ENCODE measurements at regions of chr15 and their contacts with region 1.

Region 1: GRCh38 chr15:52261498-52262242 is 33.9 kb downstream of the MYO5C start:
- DNase-seq: peak; percentile 87
- H3K4me3 Mint-ChIP-seq: peak overlapping the region; percentile 32
- H3K27ac Mint-ChIP-seq: peak overlapping the region; percentile 80
- H3K4me1 Mint-ChIP-seq: peaks cover 36% of the 10 kb centered on the region
- H3K27me3 Mint-ChIP-seq: no peaks in the 10 kb centered on the region

Region 2: GRCh38 chr15:52171386-52171785 is 90.3 kb before region 1 on chr15:
- CTCF ChIA-PET with region 1: no interaction called
- POLR2A ChIA-PET with region 1: no interaction called
- intact Hi-C with region 1: no loop called
- DNase-seq: no peak
- H3K4me3 Mint-ChIP-seq: no peak overlapping the region
- H3K27ac Mint-ChIP-seq: no peak overlapping the region
- H3K4me1 Mint-ChIP-seq: peaks cover 34% of the 10 kb centered on the region
- H3K27me3 Mint-ChIP-seq: no peaks in the 10 kb centered on the region

Region 3: DNA sequence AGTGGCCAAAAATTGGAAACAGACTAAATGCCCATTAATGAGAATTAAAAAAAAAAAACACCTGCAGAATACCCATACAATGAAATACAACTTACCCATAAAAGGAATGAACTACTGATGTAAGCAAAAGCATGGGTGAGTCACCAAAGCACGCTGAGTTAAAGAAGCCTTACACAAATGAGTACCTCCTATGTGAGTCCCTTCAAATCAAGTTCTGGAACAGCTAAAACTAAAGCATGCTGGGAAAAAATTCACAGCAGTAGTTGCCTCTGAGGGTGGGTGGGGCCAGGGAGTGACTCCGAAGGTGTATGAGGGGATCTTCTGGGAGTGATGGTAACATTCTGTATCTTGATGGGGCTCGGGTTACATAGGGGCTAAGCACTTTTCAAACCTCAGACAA is 22.5 kb after region 1 on chr15:
- CTCF ChIA-PET with region 1: interaction called, 4 read pairs
- POLR2A ChIA-PET with region 1: no interaction called
- intact Hi-C with region 1: loop called (anchors 1 kb)
- DNase-seq: peak; percentile 45
- H3K4me3 Mint-ChIP-seq: no peak overlapping the region
- H3K27ac Mint-ChIP-seq: no peak overlapping the region
- H3K4me1 Mint-ChIP-seq: peaks cover 1% of the 10 kb centered on the region
- H3K27me3 Mint-ChIP-seq: peaks cover 3% of the 10 kb centered on the region

Region 4: GRCh38 chr15:52289629-52290081 is 28.0 kb after region 1 on chr15:
- CTCF ChIA-PET with region 1: interaction called, 9 read pairs
- POLR2A ChIA-PET with region 1: no interaction called
- intact Hi-C with region 1: loop called (anchors 1 kb)
- DNase-seq: no peak
- H3K4me3 Mint-ChIP-seq: no peak overlapping the region
- H3K27ac Mint-ChIP-seq: no peak overlapping the region
- H3K4me1 Mint-ChIP-seq: peaks cover 6% of the 10 kb centered on the region
- H3K27me3 Mint-ChIP-seq: peaks cover 22% of the 10 kb centered on the region

Region 5: GRCh38 chr15:52379395-52380106 is 117.9 kb after region 1 on chr15:
- CTCF ChIA-PET with region 1: interaction called, 5 read pairs
- POLR2A ChIA-PET with region 1: no interaction called
- intact Hi-C with region 1: loop called (anchors 2 kb)
- DNase-seq: peak; percentile 51
- H3K4me3 Mint-ChIP-seq: peak overlapping the region; percentile 49
- H3K27ac Mint-ChIP-seq: peak overlapping the region; percentile 75
- H3K4me1 Mint-ChIP-seq: peaks cover 43% of the 10 kb centered on the region
- H3K27me3 Mint-ChIP-seq: no peaks in the 10 kb centered on the region